ENCODE measurements at regions of chr4 and their contacts with region 1.

Region 1: GRCh38 chr4:121252224-121252806 is 88.2 kb upstream of the TNIP3 start:
- DNase-seq: peak; percentile 66
- H3K4me3 ChIP-seq: no peak overlapping the region
- H3K27ac ChIP-seq: no peak overlapping the region
- H3K4me1 ChIP-seq: no peaks in the 10 kb centered on the region
- H3K27me3 ChIP-seq: no peaks in the 10 kb centered on the region; the same call in 1 of the 2 replicates
- CTCF ChIP-seq: peak; percentile 86
- EP300 ChIP-seq: no peak
- RAD21 ChIP-seq: peak; percentile 73

Region 2: DNA sequence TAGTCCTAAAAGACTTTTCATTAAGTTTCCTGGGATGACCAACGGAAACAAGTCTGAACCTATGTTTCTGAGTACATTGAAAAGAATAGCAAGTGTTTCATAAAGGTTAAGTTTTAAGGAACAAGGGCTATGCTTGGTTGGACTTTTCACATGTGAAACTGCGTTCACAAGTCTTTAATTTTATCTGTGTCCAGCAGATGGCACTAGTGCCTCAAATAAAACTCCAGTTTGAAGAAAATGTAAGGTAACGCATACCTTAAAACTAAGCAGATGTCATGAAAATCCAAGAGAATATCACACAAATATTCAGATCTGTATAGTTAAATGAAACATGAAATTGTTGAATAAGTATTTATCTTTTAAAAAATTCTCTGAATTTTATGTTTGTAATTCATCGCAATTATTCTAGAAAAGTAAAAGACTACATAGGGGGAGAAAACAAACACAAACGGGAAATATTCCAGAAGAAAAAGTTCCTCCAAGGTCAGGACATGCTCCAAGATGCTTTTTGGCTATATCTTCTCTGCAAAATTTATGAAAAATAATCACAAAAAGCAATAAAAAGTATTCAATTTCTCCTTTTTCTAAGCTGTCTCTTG is 1096.1 kb before region 1 on chr4:
- CTCF ChIA-PET with region 1: interaction called, 11 read pairs
- POLR2A ChIA-PET with region 1: no interaction called
- DNase-seq: peak; percentile 1
- H3K4me3 ChIP-seq: peak overlapping the region in 1 of 2 experiments; percentile 12; a peak in 1 of 4 replicates
- H3K27ac ChIP-seq: no peak overlapping the region
- H3K4me1 ChIP-seq: no peaks in the 10 kb centered on the region
- H3K27me3 ChIP-seq: no peaks in the 10 kb centered on the region; the same call in 1 of the 2 replicates
- CTCF ChIP-seq: peak; percentile 81
- EP300 ChIP-seq: no peak
- RAD21 ChIP-seq: peak; percentile 83

Region 3: DNA sequence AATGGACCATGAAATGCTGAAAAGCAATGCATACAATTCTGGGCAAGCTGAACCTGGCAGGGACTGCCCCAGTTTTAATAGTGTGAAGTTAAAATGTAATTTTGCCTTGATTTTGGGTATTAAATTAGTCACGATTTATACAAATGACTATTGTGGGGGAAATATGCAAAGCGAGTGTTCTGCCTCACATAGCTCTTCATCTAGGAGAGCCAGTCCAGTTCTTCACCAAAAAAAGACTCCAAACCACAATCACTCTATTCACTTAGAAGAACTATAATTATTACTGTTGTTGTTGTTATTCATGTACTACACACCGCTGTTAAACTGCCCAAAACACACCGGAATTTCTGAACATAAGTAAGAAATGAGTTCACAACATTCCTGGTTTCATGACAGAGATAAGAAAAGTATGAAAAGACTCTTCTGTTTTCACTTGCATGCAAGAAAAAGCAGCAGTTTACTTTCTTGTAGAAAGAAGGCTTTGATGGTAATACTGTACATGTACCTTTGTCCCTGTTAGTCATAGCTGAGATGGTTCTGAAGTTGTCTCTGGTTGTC is 26.6 kb after region 1 on chr4:
- CTCF ChIA-PET with region 1: no interaction called
- POLR2A ChIA-PET with region 1: no interaction called
- DNase-seq: no peak
- H3K4me3 ChIP-seq: no peak overlapping the region
- H3K27ac ChIP-seq: no peak overlapping the region
- H3K4me1 ChIP-seq: no peaks in the 10 kb centered on the region
- H3K27me3 ChIP-seq: 0 out of 2 replicates have a peak, but pooled peaks cover 15% of the 10 kb centered on the region
- CTCF ChIP-seq: no peak
- EP300 ChIP-seq: no peak
- RAD21 ChIP-seq: no peak